Uterus (tissue), 4 donors: ENCODE measurements at regions of chr11 and their contacts with region 1.

Region 1: GRCh38 chr11:26753723-26754504 is 32.1 kb upstream of the SLC5A12 start:
- DNase-seq: peak; percentile 47 to 65
- H3K4me3 ChIP-seq: no peak overlapping the region
- H3K27ac ChIP-seq: no peak overlapping the region
- H3K4me1 ChIP-seq: no peaks in the 10 kb centered on the region
- H3K27me3 ChIP-seq: no peaks in the 10 kb centered on the region
- CTCF ChIP-seq: peak; percentile 70 to 76 (median 70)
- POLR2A ChIP-seq: no peak

Region 2: GRCh38 chr11:26112190-26112715 is 641.7 kb before region 1 on chr11:
- intact Hi-C with region 1: no loop called
- DNase-seq: no peak
- H3K4me3 ChIP-seq: no peak overlapping the region
- H3K27ac ChIP-seq: no peak overlapping the region
- H3K4me1 ChIP-seq: no peaks in the 10 kb centered on the region
- H3K27me3 ChIP-seq: no peaks in the 10 kb centered on the region
- CTCF ChIP-seq: no peak
- POLR2A ChIP-seq: no peak

Region 3: GRCh38 chr11:26708736-26709456 is 45.0 kb before region 1 on chr11:
- intact Hi-C with region 1: no loop called
- DNase-seq: no peak
- H3K4me3 ChIP-seq: no peak overlapping the region
- H3K27ac ChIP-seq: no peak overlapping the region
- H3K4me1 ChIP-seq: no peaks in the 10 kb centered on the region
- H3K27me3 ChIP-seq: no peaks in the 10 kb centered on the region
- CTCF ChIP-seq: no peak
- POLR2A ChIP-seq: no peak

Region 4: GRCh38 chr11:27158722-27159679 is 405.1 kb after region 1 on chr11:
- intact Hi-C with region 1: loop called (anchors 10 kb)
- DNase-seq: peak; percentile 58 to 61
- H3K4me3 ChIP-seq: no peak overlapping the region
- H3K27ac ChIP-seq: no peak overlapping the region
- H3K4me1 ChIP-seq: no peaks in the 10 kb centered on the region
- H3K27me3 ChIP-seq: no peaks in the 10 kb centered on the region
- CTCF ChIP-seq: peak; percentile 79 to 91 (median 82)
- POLR2A ChIP-seq: no peak